ENCODE measurements at regions of chr3 and their contacts with region 1.

Region 1: GRCh38 chr3:141498598-141499223 is 11.9 kb downstream of the RASA2 start:
- DNase-seq: peak; percentile 94
- H3K4me3 Mint-ChIP-seq: peak overlapping the region; percentile 35
- H3K27ac Mint-ChIP-seq: peak overlapping the region; percentile 90
- H3K4me1 Mint-ChIP-seq: peaks cover 68% of the 10 kb centered on the region
- H3K27me3 Mint-ChIP-seq: no peaks in the 10 kb centered on the region

Region 2: DNA sequence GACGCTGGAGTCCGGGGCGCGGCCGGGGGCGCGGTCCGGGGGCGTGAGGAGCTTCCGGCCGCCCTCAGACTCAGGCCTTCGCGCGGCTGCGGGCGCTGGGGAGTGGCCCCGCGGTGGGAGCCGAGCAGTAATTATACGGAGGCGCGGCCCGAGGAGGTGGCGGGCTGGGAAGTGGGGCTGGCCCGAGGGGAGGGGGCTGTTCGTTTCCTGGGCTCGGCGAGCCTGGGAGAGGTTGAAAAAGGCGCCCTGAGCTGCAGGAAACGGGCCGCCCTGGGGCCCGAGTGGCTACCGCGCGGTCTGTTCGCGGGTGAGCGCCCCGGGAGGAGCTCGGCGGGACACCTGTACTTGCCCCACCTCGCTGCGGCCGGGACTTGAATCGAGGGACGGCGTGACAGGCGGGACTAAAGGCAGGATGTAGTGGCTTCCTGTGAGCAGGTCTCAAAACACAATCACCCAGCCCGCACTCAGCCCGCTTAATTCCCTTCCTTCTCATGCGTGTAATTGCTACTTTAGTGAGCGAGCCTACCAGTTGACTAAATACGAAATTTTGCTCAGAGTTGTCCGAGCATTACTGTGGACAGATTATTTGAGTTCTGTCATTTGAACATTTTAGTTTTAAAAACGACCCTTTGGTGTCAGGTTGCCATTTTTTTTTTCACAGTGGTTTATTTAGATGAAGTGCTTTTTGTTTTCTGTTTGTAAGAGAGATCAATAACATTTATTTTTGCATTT is 11.0 kb before region 1 on chr3:
- CTCF ChIA-PET with region 1: interaction called, 33 read pairs
- POLR2A ChIA-PET with region 1: interaction called, 90 read pairs
- intact Hi-C with region 1: loop called (anchors 1 kb)
- DNase-seq: peak; percentile 94
- H3K4me3 Mint-ChIP-seq: peak overlapping the region; percentile 84
- H3K27ac Mint-ChIP-seq: peak overlapping the region; percentile 94
- H3K4me1 Mint-ChIP-seq: peaks cover 67% of the 10 kb centered on the region
- H3K27me3 Mint-ChIP-seq: no peaks in the 10 kb centered on the region

Region 3: GRCh38 chr3:141514382-141514781 is 15.7 kb after region 1 on chr3:
- CTCF ChIA-PET with region 1: interaction called, 7 read pairs
- POLR2A ChIA-PET with region 1: interaction called, 6 read pairs
- intact Hi-C with region 1: loop called (anchors 1 kb)
- DNase-seq: no peak
- H3K4me3 Mint-ChIP-seq: no peak overlapping the region
- H3K27ac Mint-ChIP-seq: peak overlapping the region; percentile 57
- H3K4me1 Mint-ChIP-seq: peaks cover 52% of the 10 kb centered on the region
- H3K27me3 Mint-ChIP-seq: no peaks in the 10 kb centered on the region

Region 4: DNA sequence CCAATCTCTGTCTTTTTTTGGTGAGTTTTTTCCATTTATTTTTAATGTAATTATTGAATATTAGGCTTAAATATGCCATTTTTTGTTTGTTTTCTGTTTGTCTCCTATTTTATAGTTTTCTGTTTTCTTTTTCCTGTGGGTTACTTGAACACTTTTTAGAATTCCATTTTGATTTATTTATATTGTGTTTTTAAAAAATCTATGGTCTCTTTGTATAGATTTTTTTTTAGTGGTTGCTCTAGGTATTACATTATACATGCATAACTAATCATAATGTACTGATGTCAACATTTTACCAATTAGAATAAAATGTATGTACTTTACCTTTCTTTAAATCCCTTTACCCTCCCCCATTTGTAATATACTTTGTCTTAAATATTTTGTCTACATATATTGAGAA is 44.3 kb after region 1 on chr3:
- CTCF ChIA-PET with region 1: interaction called, 7 read pairs
- POLR2A ChIA-PET with region 1: interaction called, 9 read pairs
- intact Hi-C with region 1: loop called (anchors 1 kb)
- DNase-seq: no peak
- H3K4me3 Mint-ChIP-seq: no peak overlapping the region
- H3K27ac Mint-ChIP-seq: peak overlapping the region; percentile 74
- H3K4me1 Mint-ChIP-seq: peaks cover 78% of the 10 kb centered on the region
- H3K27me3 Mint-ChIP-seq: no peaks in the 10 kb centered on the region

Region 5: DNA sequence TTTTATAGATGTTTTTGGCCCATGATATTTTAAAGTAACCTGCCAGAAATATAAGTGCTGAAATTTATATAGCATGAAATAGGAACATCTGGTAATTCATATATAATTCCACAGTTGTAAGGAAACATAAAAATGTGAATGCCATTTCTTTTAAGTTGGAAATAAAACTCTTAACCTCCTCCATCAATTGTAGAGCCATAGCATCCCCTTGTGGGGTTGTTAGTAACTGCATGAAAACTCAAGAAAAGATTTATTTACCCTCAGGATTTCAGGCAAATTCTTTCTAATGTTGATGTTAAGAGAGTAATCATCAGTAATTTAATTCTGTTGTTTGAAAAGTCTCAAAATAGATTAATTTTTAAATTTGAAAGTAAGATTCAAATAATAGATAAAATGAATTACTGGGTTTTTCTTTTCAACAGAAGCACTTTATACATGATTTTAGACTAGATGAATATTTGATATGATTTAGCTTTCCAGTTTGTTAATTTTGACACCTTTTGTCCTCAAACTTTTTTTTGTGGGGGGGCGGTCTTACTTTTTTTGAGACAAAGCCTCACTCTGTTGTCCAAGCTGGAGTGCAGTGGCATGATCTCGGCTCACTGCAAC is 62.8 kb after region 1 on chr3:
- CTCF ChIA-PET with region 1: interaction called, 13 read pairs
- POLR2A ChIA-PET with region 1: interaction called, 18 read pairs
- intact Hi-C with region 1: no loop called
- DNase-seq: no peak
- H3K4me3 Mint-ChIP-seq: no peak overlapping the region
- H3K27ac Mint-ChIP-seq: peak overlapping the region; percentile 40
- H3K4me1 Mint-ChIP-seq: peaks cover 25% of the 10 kb centered on the region
- H3K27me3 Mint-ChIP-seq: no peaks in the 10 kb centered on the region

Region 6: DNA sequence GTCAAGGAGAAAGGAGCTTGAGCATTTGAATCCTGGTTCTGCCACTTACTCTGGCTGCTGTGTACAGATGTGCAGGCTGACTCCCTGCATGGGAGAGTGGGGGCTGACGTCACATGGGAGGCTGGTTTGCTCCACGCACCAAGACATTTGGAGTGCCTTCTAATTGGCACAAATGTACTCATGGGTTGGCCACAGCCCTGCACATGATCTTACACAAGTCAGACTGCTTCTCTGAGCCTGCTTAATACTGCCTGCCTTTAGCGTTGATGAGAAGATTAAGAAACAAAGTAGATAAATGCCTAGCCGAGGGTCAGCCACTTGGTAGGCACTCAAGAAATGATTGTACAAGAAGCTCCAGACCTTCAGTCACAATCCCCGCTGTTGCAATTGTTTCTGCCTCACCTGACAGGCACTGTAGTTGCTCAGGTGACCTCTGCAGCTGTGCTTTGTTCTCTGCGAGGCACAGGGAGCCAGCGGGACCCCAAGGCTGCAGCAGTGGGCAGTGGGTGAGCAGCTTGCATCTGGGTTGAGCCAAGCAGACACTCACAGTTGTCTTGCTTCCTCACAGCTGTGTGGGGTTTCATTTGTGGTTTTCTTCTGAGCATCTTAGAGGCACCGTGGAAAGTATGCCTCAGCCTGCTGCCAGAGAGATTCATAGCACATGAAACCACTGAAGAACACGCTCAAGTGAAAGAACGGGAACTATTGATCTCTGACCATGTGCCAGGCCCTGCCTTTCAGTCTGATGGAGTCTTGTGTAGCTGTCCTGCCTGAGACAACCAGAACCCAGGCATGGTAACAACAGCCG is 297.6 kb after region 1 on chr3:
- CTCF ChIA-PET with region 1: interaction called, 3 read pairs
- POLR2A ChIA-PET with region 1: no interaction called
- intact Hi-C with region 1: loop called (anchors 10 kb)
- DNase-seq: peak; percentile 88
- H3K4me3 Mint-ChIP-seq: peak overlapping the region; percentile 84
- H3K27ac Mint-ChIP-seq: peak overlapping the region; percentile 94
- H3K4me1 Mint-ChIP-seq: peaks cover 48% of the 10 kb centered on the region
- H3K27me3 Mint-ChIP-seq: no peaks in the 10 kb centered on the region

Region 7: DNA sequence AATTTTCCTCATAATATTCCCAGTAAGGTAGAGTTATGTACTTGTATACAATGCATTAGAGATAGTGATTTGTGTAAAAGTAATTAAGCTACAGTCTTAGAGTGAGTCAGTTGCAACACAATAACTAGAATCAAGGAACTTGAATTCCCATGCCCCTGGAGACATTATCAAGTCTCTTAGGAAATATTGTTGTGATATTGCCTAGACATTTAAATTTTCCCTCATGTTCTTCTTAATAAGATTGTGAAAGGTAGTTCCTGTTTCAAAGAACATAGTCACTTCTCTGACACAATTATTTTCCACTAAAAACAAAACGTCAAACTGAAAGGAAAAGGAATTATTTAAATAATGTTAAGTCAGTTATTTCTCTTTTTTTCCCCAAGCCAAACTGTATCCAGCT is 364.8 kb after region 1 on chr3:
- CTCF ChIA-PET with region 1: no interaction called
- POLR2A ChIA-PET with region 1: no interaction called
- intact Hi-C with region 1: no loop called
- DNase-seq: no peak
- H3K4me3 Mint-ChIP-seq: no peak overlapping the region
- H3K27ac Mint-ChIP-seq: no peak overlapping the region
- H3K4me1 Mint-ChIP-seq: peaks cover 2% of the 10 kb centered on the region
- H3K27me3 Mint-ChIP-seq: no peaks in the 10 kb centered on the region

Measured in activated CD4-positive, alpha-beta memory T cell treated with anti-CD3 and anti-CD28 coated beads for 36 hours (primary cell).